Tibial artery (tissue), 4 donors: ENCODE measurements at regions of chr4 and their contacts with region 1.

Region 1: DNA sequence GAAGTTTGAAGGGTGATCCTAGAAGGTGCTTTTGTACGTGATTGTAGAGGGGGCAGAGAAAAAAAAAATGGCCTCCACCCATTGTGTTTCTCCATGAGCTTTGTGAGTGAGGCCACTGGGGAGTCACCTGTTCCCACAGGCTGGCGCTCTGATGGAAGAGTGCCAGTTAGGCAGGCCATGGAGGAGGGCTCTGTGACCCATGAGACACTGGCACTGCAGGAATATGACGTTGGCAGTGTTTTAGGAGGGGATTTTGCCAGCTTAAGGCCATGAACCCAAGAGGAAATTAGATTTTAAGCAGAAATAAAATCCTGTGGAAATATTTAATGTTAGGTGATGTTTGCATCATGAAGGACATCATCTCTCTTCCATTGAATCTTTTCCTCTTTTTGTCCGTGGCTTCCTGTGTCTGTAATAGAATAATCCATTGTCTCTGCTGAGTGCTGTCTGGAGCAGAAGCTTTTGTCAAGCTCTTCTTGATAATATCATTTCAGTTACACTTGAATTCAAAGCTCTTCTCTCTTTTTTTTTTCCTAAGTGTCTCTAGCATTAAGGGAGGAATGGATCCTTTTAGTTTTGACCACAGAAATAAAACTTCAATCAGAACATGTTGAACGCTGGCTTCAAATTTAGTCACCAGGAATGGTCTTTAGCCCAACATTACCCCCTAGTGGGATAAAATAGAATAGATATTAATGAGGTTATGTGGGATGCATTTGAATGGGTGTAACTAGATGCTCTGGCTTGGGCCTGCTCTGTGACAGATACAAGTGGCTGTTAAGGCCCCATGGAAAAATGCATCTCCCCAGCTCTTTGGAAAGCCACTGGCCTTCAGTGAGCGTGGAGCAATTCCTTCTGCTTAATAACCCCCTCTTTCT is 41.0 kb upstream of the UCP1 start:
- DNase-seq: no peak
- H3K4me3 ChIP-seq: no peak overlapping the region
- H3K27ac ChIP-seq: no peak overlapping the region
- H3K4me1 ChIP-seq: no peaks in the 10 kb centered on the region
- H3K27me3 ChIP-seq: no peaks in the 10 kb centered on the region
- CTCF ChIP-seq: peak; percentile 35 to 49

Region 2: GRCh38 chr4:140469791-140470733 is 139.7 kb before region 1 on chr4:
- intact Hi-C with region 1: no loop called
- DNase-seq: no peak
- H3K4me3 ChIP-seq: no peak overlapping the region
- H3K27ac ChIP-seq: no peak overlapping the region
- H3K4me1 ChIP-seq: no peaks in the 10 kb centered on the region
- H3K27me3 ChIP-seq: peaks cover 0 to 5% of the 10 kb centered on the region in 2 donors
- CTCF ChIP-seq: no peak

Region 3: GRCh38 chr4:140851032-140851636 is 241.3 kb after region 1 on chr4:
- intact Hi-C with region 1: loop called (anchors 10 kb)
- DNase-seq: peak in 1 of 2 donors; percentile 30
- H3K4me3 ChIP-seq: no peak overlapping the region
- H3K27ac ChIP-seq: no peak overlapping the region
- H3K4me1 ChIP-seq: peaks cover 0 to 6% (median 0%) of the 10 kb centered on the region in 4 donors
- H3K27me3 ChIP-seq: peaks cover 0 to 8% of the 10 kb centered on the region in 2 donors
- CTCF ChIP-seq: peak; percentile 72 to 88